ENCODE measurements at regions of chr6 and their contacts with region 1.

Region 1: GRCh38 chr6:43506667-43507471 is 3.3 kb downstream of the LRRC73 start:
- DNase-seq: peak; percentile 73 to 79 (median 77)
- H3K4me3 ChIP-seq: no peak overlapping the region
- H3K4me3 Mint-ChIP-seq: peak overlapping the region in 1 of 8 donors; percentile 70
- H3K27ac ChIP-seq: peak overlapping the region; percentile 8
- H3K27ac Mint-ChIP-seq: peak overlapping the region in 6 of 7 donors; percentile 31 to 86 (median 69)
- H3K4me1 ChIP-seq: peaks cover 17% of the 10 kb centered on the region
- H3K4me1 Mint-ChIP-seq: peaks cover 8 to 37% (median 18%) of the 10 kb centered on the region in 4 donors
- H3K27me3 ChIP-seq: peaks cover 11% of the 10 kb centered on the region
- H3K27me3 Mint-ChIP-seq: peaks cover 9 to 13% of the 10 kb centered on the region in 2 donors

Region 2: DNA sequence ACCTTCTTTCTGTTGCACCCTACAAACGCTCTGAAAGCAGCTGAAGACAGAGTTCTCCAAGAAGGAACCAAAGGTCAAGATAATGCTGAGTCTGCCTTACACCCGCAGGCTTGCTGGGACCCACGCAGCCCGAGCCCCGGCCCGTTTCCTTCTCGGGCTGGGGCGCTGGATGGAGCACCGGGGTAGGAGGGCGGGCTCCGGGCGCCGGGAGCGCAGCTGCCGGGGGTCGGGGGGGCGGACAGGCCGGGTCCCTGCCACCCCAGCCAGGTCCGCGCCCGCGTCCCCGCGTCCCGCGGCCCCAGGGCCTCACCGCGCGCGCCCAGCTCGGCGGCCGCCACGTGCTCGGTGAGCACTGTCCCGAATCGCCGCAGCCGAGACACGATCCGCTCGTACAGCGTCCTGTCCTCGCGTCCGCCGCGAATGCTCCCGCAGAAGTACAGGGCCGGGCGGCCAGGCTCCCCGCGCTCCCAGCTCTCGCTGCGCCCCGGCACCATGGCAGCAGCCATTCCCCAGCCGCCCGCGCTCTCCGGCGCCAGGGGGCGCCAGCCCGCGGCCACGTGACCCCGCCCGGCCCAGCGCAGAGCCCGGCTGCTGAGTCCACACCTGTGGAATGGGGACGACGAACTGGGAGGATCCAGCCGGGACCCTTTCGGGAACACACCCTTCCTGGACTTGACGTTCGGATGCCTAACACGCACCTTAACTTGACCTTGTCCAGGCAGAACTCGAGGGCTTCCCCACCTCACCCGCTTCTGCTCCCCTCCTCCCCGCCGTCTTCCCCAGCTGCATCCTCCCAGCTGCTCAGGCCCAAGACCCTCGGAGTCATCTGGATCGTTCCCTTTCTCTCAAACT is 277.7 kb before region 1 on chr6 and contains the start of gene DNPH1:
- CTCF ChIA-PET with region 1: interaction called, 11 read pairs
- POLR2A ChIA-PET with region 1: no interaction called
- intact Hi-C with region 1: no loop called
- DNase-seq: peak; percentile 71 to 84 (median 79)
- H3K4me3 ChIP-seq: peak within 1 kb of the TSS; percentile 11 to 69
- H3K4me3 Mint-ChIP-seq: peak within 1 kb of the TSS; percentile 88 to 96 (median 92)
- H3K27ac ChIP-seq: peak within 1 kb of the TSS; percentile 63
- H3K27ac Mint-ChIP-seq: peak within 1 kb of the TSS; percentile 94 to 97 (median 95)
- H3K4me1 ChIP-seq: peaks cover 49% of the 10 kb centered on the region
- H3K4me1 Mint-ChIP-seq: peaks cover 26 to 48% (median 34%) of the 10 kb centered on the region in 4 donors
- H3K27me3 ChIP-seq: no peaks in the 10 kb centered on the region
- H3K27me3 Mint-ChIP-seq: peaks cover 3 to 4% of the 10 kb centered on the region in 2 donors
- total RNA-seq, gene DNPH1: 32.8 to 34.8 TPM

Region 3: GRCh38 chr6:43308101-43308989 is 198.5 kb before region 1 on chr6 and contains the start of gene CRIP3:
- CTCF ChIA-PET with region 1: interaction called, 3 read pairs
- POLR2A ChIA-PET with region 1: no interaction called
- intact Hi-C with region 1: loop called (anchors 1 kb)
- DNase-seq: peak; percentile 42 to 63 (median 46)
- H3K4me3 ChIP-seq: peak within 1 kb of the TSS; percentile 42 to 43
- H3K4me3 Mint-ChIP-seq: peak within 1 kb of the TSS; percentile 75 to 89 (median 84)
- H3K27ac ChIP-seq: no peak within 1 kb of the TSS
- H3K27ac Mint-ChIP-seq: peak within 1 kb of the TSS in 6 of 7 donors; percentile 17 to 88 (median 52)
- H3K4me1 ChIP-seq: peaks cover 14% of the 10 kb centered on the region
- H3K4me1 Mint-ChIP-seq: peaks cover 3 to 12% (median 8%) of the 10 kb centered on the region in 4 donors
- H3K27me3 ChIP-seq: no peaks in the 10 kb centered on the region
- H3K27me3 Mint-ChIP-seq: no peaks in the 10 kb centered on the region
- total RNA-seq, gene CRIP3: 1.9 to 3.0 TPM

Region 4: GRCh38 chr6:43402820-43403219 is 104.0 kb before region 1 on chr6:
- CTCF ChIA-PET with region 1: interaction called, 13 read pairs
- POLR2A ChIA-PET with region 1: no interaction called
- intact Hi-C with region 1: no loop called
- DNase-seq: no peak
- H3K4me3 ChIP-seq: no peak overlapping the region
- H3K4me3 Mint-ChIP-seq: no peak overlapping the region
- H3K27ac ChIP-seq: no peak overlapping the region
- H3K27ac Mint-ChIP-seq: no peak overlapping the region
- H3K4me1 ChIP-seq: peaks cover 4% of the 10 kb centered on the region
- H3K4me1 Mint-ChIP-seq: peaks cover under 1 to 3% (median 2%) of the 10 kb centered on the region in 4 donors
- H3K27me3 ChIP-seq: no peaks in the 10 kb centered on the region
- H3K27me3 Mint-ChIP-seq: peaks cover 6 to 11% of the 10 kb centered on the region in 2 donors

Region 5: GRCh38 chr6:43454696-43455530 is 52.0 kb before region 1 on chr6:
- CTCF ChIA-PET with region 1: interaction called, 64 read pairs
- POLR2A ChIA-PET with region 1: interaction called, 19 read pairs
- intact Hi-C with region 1: loop called (anchors 1 kb)
- DNase-seq: peak; percentile 26 to 50 (median 31)
- H3K4me3 ChIP-seq: peak overlapping the region; percentile 52 to 68
- H3K4me3 Mint-ChIP-seq: peak overlapping the region; percentile 62 to 88 (median 84)
- H3K27ac ChIP-seq: peak overlapping the region; percentile 36
- H3K27ac Mint-ChIP-seq: peak overlapping the region in 6 of 7 donors; percentile 10 to 86 (median 76)
- H3K4me1 ChIP-seq: peaks cover 15% of the 10 kb centered on the region
- H3K4me1 Mint-ChIP-seq: peaks cover 7 to 23% (median 10%) of the 10 kb centered on the region in 4 donors
- H3K27me3 ChIP-seq: no peaks in the 10 kb centered on the region
- H3K27me3 Mint-ChIP-seq: peaks cover 2 to 5% of the 10 kb centered on the region in 2 donors

Region 6: DNA sequence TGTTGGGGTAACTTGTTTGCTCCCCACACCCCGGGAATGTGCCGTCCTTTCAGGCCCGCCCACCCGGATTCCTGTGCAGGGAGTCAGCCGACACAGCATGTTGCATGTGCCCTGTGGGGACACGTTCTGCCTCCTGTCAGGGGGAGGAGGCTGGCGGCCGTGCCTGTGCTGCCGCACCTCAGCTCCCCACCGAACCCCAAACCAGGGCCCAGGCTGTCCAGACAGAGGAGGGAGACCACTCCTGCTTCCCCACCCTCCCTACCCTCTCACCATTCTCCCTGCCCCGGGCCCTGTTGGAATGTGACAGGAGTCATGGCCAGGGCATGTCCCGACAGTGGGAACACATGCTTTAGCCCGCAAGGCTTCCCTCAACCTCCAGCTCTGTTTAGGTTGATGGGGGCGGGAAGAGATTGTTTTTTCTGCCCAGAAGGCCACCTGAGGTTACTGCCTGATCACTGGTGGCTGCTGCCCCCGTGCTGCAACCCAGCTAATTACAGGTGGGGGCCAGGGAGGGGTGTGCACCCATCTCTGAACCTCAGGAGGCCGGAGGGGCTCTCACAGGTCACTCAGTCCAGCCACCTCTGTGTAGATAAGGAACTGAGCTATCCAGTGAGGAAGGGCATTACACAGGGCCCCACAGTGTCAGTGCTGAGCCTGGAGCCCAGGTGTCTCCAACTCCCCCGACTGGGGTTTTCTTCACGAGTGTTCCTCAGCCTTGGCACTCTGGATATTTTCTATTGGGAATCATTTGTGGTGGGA is 10.3 kb before region 1 on chr6:
- CTCF ChIA-PET with region 1: interaction called, 108 read pairs
- POLR2A ChIA-PET with region 1: interaction called, 15 read pairs
- intact Hi-C with region 1: no loop called
- DNase-seq: no peak
- H3K4me3 ChIP-seq: no peak overlapping the region
- H3K4me3 Mint-ChIP-seq: no peak overlapping the region
- H3K27ac ChIP-seq: no peak overlapping the region
- H3K27ac Mint-ChIP-seq: peak overlapping the region in 5 of 7 donors; percentile 47 to 85 (median 65)
- H3K4me1 ChIP-seq: peaks cover 33% of the 10 kb centered on the region
- H3K4me1 Mint-ChIP-seq: peaks cover 20 to 37% (median 27%) of the 10 kb centered on the region in 4 donors
- H3K27me3 ChIP-seq: no peaks in the 10 kb centered on the region
- H3K27me3 Mint-ChIP-seq: no peaks in the 10 kb centered on the region

Measured in CD4-positive, alpha-beta memory T cell (primary cell).